CD4-positive, alpha-beta memory T cell (primary cell): ENCODE measurements at regions of chr11 and their contacts with region 1.

Region 1: GRCh38 chr11:104956528-104956927 is 11.8 kb downstream of the CASP4 start:
- DNase-seq: no peak
- H3K4me3 ChIP-seq: no peak overlapping the region
- H3K4me3 Mint-ChIP-seq: peak overlapping the region in 3 of 8 donors; percentile 11 to 29 (median 25)
- H3K27ac ChIP-seq: no peak overlapping the region
- H3K27ac Mint-ChIP-seq: peak overlapping the region in 2 of 7 donors; percentile 22 to 24
- H3K4me1 ChIP-seq: peaks cover 70% of the 10 kb centered on the region
- H3K4me1 Mint-ChIP-seq: peaks cover 52 to 71% (median 60%) of the 10 kb centered on the region in 4 donors
- H3K27me3 ChIP-seq: no peaks in the 10 kb centered on the region
- H3K27me3 Mint-ChIP-seq: no peaks in the 10 kb centered on the region

Region 2: GRCh38 chr11:104926771-104927611 is 29.5 kb before region 1 on chr11:
- CTCF ChIA-PET with region 1: no interaction called
- POLR2A ChIA-PET with region 1: no interaction called
- intact Hi-C with region 1: loop called (anchors 2 kb)
- DNase-seq: peak in 1 of 5 donors; percentile 35
- H3K4me3 ChIP-seq: no peak overlapping the region
- H3K4me3 Mint-ChIP-seq: no peak overlapping the region
- H3K27ac ChIP-seq: no peak overlapping the region
- H3K27ac Mint-ChIP-seq: no peak overlapping the region
- H3K4me1 ChIP-seq: no peaks in the 10 kb centered on the region
- H3K4me1 Mint-ChIP-seq: peaks cover 1 to 10% (median 2%) of the 10 kb centered on the region in 4 donors
- H3K27me3 ChIP-seq: no peaks in the 10 kb centered on the region
- H3K27me3 Mint-ChIP-seq: no peaks in the 10 kb centered on the region

Region 3: DNA sequence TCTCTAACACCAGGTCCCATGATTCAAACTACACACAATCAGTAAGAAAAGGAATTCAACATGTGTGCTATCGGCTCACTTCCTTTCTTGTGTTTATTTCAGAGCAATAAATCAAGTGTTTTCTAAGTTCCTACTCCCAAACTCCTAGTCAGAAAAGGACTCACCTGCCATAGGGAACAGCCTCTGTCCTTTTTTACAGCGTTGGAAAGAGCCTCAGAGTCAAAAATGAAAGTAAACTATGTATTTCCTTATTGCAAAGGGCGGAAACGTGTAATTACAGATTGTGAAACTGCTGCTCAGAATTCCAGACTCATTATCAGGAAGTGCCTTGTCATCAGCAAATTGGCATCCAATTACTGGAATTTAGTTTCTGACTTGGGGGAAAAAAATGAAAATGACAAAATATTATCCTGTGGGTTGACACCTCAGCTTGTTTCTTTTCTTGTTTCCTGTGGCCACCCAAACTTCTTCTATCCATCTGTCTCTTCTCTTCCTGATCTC is 11.9 kb after region 1 on chr11 and contains the start of gene CASP4:
- CTCF ChIA-PET with region 1: interaction called, 3 read pairs
- POLR2A ChIA-PET with region 1: interaction called, 15 read pairs
- intact Hi-C with region 1: loop called (anchors 1 kb)
- DNase-seq: peak in 4 of 5 donors; percentile 46 to 57 (median 55)
- H3K4me3 ChIP-seq: peak within 1 kb of the TSS; percentile 78 to 81
- H3K4me3 Mint-ChIP-seq: peak within 1 kb of the TSS; percentile 92 to 98 (median 95)
- H3K27ac ChIP-seq: peak within 1 kb of the TSS; percentile 82
- H3K27ac Mint-ChIP-seq: peak within 1 kb of the TSS; percentile 90 to 99 (median 98)
- H3K4me1 ChIP-seq: peaks cover 42% of the 10 kb centered on the region
- H3K4me1 Mint-ChIP-seq: peaks cover 29 to 43% (median 36%) of the 10 kb centered on the region in 4 donors
- H3K27me3 ChIP-seq: no peaks in the 10 kb centered on the region
- H3K27me3 Mint-ChIP-seq: no peaks in the 10 kb centered on the region
- total RNA-seq, gene CASP4: 97.9 to 98.4 TPM